Esophagus muscularis mucosa (tissue), 4 donors: ENCODE measurements at regions of chr2 and their contacts with region 1.

Region 1: DNA sequence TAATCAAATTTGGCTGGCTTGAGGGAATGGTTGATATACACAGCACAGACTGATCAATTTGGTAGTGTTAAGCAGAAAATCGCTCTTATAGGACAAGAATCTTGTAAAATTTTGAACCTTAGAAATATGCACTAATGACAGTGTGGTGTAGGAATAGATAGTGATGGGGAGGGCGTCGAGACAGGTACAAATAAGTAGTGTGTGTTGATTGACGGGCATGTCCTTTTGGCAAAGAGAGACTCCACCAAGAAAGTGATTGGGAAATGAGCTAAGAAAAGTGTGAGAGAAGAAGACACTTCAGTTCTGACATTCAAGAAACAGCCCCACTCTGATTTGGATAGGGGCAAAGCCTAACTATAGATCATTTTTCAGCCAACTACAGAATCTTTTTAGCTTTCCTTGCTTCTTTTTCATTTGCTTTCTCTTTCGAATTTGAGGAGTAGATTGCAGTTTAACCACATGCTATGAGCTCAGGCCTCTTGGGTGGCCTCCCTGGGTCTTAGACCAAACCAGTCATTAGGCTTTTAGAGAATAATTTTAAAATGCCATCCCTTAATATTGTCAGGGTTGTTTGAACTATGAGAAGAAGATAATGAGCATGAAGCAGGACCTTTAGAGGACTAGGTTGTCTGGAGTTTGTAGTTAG is 127.1 kb downstream of the CERS6 start:
- DNase-seq: no peak
- H3K4me3 ChIP-seq: no peak overlapping the region
- H3K27ac ChIP-seq: peak overlapping the region; percentile 15 to 42 (median 25)
- H3K4me1 ChIP-seq: peaks cover 23 to 46% (median 44%) of the 10 kb centered on the region in 4 donors
- H3K27me3 ChIP-seq: no peaks in the 10 kb centered on the region
- CTCF ChIP-seq: no peak
- EP300 ChIP-seq: no peak
- POLR2A ChIP-seq: no peak

Region 2: GRCh38 chr2:168397629-168398028 is 185.6 kb before region 1 on chr2:
- intact Hi-C with region 1: no loop called
- DNase-seq: no peak
- H3K4me3 ChIP-seq: no peak overlapping the region
- H3K27ac ChIP-seq: no peak overlapping the region
- H3K4me1 ChIP-seq: no peaks in the 10 kb centered on the region
- H3K27me3 ChIP-seq: no peaks in the 10 kb centered on the region
- CTCF ChIP-seq: no peak
- EP300 ChIP-seq: no peak
- POLR2A ChIP-seq: no peak

Region 3: GRCh38 chr2:168521053-168521741 is 62.0 kb before region 1 on chr2:
- intact Hi-C with region 1: loop called (anchors 10 kb)
- DNase-seq: no peak
- H3K4me3 ChIP-seq: peak overlapping the region in 2 of 4 donors; percentile 1 to 13
- H3K27ac ChIP-seq: peak overlapping the region in 3 of 4 donors; percentile 2 to 15 (median 11)
- H3K4me1 ChIP-seq: peaks cover 73 to 89% (median 80%) of the 10 kb centered on the region in 4 donors
- H3K27me3 ChIP-seq: no peaks in the 10 kb centered on the region
- CTCF ChIP-seq: no peak
- EP300 ChIP-seq: no peak
- POLR2A ChIP-seq: no peak

Region 4: GRCh38 chr2:168614172-168615018 is 31.2 kb after region 1 on chr2:
- intact Hi-C with region 1: no loop called
- DNase-seq: no peak
- H3K4me3 ChIP-seq: no peak overlapping the region
- H3K27ac ChIP-seq: no peak overlapping the region
- H3K4me1 ChIP-seq: peaks cover 0 to 13% (median 8%) of the 10 kb centered on the region in 4 donors
- H3K27me3 ChIP-seq: no peaks in the 10 kb centered on the region
- CTCF ChIP-seq: no peak
- EP300 ChIP-seq: no peak
- POLR2A ChIP-seq: no peak